Esophagus muscularis mucosa (tissue), 4 donors: ENCODE measurements at regions of chr9 and their contacts with region 1.

Region 1: DNA sequence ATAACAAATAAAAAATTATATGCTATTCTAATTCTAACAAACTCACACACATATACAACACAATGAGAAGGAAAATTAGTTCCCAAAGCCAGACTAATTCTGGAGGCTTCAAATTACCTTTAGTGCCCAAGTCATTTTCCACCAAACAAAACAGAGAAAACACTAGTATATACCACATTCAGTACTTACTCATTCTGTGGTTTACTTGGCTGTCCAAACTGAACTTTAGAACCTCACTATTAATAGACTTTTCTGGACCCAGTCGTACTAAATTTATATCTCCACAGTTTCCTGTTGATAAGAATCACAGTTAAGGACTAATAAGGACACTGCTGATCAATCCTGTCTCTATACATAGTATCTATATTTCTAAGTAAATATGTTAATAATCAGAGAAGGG is 66.4 kb downstream of the SETX start:
- DNase-seq: no peak
- H3K4me3 ChIP-seq: no peak overlapping the region
- H3K27ac ChIP-seq: no peak overlapping the region
- H3K4me1 ChIP-seq: peaks cover 8 to 13% (median 11%) of the 10 kb centered on the region in 4 donors
- H3K27me3 ChIP-seq: no peaks in the 10 kb centered on the region
- CTCF ChIP-seq: no peak
- EP300 ChIP-seq: no peak
- POLR2A ChIP-seq: no peak

Region 2: DNA sequence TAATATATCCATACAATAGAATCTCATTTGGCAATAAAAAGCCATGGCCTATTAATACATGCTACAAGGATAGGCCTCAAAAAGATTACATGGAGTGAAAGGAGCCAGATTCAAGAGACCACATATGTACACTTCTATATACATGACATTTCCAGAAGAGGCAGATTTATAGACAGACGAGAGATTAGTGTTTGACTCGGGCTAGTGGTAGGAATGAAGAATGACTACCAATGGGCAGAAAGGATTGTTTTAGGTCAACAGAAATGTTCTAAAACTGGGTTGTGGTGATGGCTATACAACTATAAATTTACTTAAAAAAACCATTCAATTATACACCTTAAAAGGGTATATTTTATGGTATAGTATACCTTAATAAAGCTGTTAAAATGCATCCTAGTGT is 24.5 kb after region 1 on chr9:
- intact Hi-C with region 1: no loop called
- DNase-seq: no peak
- H3K4me3 ChIP-seq: no peak overlapping the region
- H3K27ac ChIP-seq: no peak overlapping the region
- H3K4me1 ChIP-seq: no peaks in the 10 kb centered on the region
- H3K27me3 ChIP-seq: no peaks in the 10 kb centered on the region
- CTCF ChIP-seq: peak in 1 of 3 experiments; percentile 6
- EP300 ChIP-seq: no peak
- POLR2A ChIP-seq: no peak

Region 3: DNA sequence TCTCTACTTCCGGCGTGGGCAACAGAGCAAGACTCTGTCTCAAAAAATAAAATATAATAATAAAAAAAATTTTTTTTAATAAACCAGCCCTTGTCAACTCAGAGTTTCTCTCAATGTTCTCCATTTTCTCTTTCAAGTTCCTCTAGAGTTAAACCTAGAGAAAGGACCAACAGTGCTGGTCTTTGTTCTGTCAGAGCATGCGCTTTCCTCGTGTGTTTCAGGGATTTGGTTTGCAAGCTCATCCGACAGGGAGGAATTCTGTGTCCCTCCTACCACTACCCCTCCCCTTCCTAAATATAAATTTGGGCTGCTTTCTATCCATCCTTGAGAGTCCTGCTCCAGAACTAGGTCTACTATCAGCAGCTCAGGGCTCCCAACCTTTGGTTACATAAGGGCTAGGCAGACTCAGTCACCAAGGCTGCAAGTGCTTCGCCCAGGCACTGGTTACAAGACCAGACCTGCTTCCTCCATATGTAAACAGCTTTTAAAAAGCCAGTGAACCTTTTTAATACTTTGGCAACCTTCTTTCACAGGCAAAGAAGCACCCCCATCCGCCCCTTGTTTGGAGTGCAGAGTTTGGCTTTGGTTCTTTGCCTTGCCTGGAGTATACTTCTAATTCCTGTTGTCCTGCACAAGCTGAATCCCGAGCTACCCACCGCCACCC is 52.9 kb after region 1 on chr9:
- intact Hi-C with region 1: loop called (anchors 10 kb)
- DNase-seq: no peak
- H3K4me3 ChIP-seq: no peak overlapping the region
- H3K27ac ChIP-seq: no peak overlapping the region
- H3K4me1 ChIP-seq: no peaks in the 10 kb centered on the region
- H3K27me3 ChIP-seq: no peaks in the 10 kb centered on the region
- CTCF ChIP-seq: no peak
- EP300 ChIP-seq: no peak
- POLR2A ChIP-seq: no peak